ENCODE measurements at regions of chr6 and their contacts with region 1.

Region 1: DNA sequence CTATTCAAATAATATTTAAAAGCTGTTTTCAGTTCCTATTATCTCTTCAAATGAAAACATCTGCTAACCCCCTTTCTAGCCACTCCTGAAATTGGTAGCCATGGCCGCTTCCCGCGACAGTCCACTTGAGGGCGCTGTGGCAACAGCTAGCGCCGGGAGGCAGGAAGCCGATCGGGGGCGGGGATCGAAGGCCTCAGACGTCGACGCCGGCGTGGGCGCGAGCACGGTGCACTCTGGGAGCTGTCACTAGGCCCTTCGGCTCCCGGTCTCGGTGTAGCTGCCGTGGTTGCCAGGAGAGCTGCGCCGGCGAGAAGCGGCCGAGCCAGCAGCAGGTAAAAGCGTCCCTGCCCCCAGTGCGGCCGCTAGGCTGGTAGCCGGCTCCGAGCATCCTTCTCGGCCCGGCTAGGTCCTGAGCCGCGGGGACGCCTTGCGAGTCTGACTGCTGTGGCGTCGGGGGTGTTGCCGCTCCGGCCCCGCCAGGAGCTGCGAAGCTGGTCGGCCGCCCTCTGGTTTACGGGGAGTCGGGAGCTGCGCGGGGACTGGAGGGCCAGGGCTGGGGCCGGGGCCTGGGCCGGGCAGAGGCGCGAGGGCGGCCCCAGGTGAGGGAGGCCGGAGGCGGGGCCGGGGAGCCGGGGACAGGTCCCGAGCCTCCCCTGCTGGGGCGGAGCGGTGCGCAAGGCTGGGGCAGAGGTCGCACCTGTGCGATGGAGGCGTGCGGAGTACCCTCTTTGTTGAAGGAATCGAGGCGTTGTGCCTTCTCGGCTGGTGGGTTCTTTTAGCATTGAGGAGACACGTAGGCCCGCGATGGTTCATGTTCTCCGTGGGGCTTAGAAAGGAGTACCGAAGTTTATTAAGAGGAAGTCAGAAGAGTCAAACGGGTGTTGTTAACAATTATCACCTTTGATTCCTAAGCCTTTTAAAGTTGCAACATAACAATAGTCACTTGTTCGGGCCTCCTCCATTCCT is at the start of gene DOP1A:
- DNase-seq: peak; percentile 92
- H3K4me3 Mint-ChIP-seq: peak within 1 kb of the TSS; percentile 89
- H3K27ac Mint-ChIP-seq: peak within 1 kb of the TSS; percentile 89
- H3K4me1 Mint-ChIP-seq: peaks cover 28% of the 10 kb centered on the region
- H3K27me3 Mint-ChIP-seq: no peaks in the 10 kb centered on the region
- total RNA-seq, gene DOP1A: 6.7 and 7.1 TPM in 2 replicates

Region 2: GRCh38 chr6:82247634-82248232 is 820.0 kb before region 1 on chr6 and contains the start of gene IBTK:
- intact Hi-C with region 1: loop called (anchors 1 kb)
- DNase-seq: peak; percentile 88
- H3K4me3 Mint-ChIP-seq: peak within 1 kb of the TSS; percentile 93
- H3K27ac Mint-ChIP-seq: peak within 1 kb of the TSS; percentile 92
- H3K4me1 Mint-ChIP-seq: peaks cover 39% of the 10 kb centered on the region
- H3K27me3 Mint-ChIP-seq: no peaks in the 10 kb centered on the region
- total RNA-seq, gene IBTK: 36.1 and 39.8 TPM in 2 replicates

Region 3: DNA sequence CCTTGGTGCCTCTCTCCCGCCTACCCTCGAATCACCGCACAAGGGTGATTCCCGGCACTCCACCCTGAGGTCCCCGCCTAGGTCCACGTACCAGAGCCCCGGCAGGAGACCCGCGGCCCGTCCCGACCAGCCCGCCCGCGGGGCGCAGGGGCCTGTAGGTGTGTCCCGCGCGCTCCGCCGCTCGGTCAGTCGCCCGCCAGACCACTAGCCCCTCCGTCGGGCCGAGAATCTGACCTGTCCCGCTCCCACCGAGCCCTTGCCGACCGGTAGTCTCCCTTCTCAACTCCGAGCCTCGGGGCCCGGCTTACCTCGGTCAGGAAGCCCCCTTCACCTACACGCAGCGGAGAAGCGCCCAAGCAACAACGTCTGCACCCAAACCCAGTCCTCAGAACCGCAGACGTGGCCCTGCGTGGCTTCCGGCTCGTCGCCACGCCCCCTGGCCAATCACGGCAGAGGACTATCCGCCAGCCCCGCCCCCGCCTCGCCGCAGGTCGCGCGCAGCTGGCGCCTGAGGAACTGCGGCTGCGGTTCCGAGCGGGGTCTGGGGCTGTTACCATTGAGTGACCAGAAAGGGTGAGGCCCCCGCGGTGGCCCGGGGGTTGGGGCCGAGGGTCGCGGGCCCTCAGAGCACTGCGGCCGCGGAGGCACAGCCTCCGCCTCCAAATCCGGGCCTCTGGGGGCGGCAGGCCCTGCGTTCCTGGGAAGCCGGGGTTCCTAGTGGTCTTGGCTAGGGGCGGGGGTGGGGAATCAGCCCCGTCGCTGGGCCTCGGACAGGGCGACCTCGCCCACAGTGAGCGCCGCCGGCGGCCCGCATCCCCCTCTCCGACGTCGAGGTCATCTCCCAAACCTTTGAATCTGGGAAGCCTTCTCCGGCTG is 125.4 kb after region 1 on chr6 and contains the starts of genes PGM3 and RWDD2A:
- intact Hi-C with region 1: loop called (anchors 1 kb)
- DNase-seq: peak; percentile 85
- H3K4me3 Mint-ChIP-seq: peak within 1 kb of the TSS; percentile 98
- H3K27ac Mint-ChIP-seq: peak within 1 kb of the TSS; percentile 94
- H3K4me1 Mint-ChIP-seq: peaks cover 38% of the 10 kb centered on the region
- H3K27me3 Mint-ChIP-seq: peaks cover 2% of the 10 kb centered on the region
- total RNA-seq, gene PGM3: 24.8 and 25.4 TPM in 2 replicates
- total RNA-seq, gene RWDD2A: 0.98 and 1.3 TPM in 2 replicates

Region 4: DNA sequence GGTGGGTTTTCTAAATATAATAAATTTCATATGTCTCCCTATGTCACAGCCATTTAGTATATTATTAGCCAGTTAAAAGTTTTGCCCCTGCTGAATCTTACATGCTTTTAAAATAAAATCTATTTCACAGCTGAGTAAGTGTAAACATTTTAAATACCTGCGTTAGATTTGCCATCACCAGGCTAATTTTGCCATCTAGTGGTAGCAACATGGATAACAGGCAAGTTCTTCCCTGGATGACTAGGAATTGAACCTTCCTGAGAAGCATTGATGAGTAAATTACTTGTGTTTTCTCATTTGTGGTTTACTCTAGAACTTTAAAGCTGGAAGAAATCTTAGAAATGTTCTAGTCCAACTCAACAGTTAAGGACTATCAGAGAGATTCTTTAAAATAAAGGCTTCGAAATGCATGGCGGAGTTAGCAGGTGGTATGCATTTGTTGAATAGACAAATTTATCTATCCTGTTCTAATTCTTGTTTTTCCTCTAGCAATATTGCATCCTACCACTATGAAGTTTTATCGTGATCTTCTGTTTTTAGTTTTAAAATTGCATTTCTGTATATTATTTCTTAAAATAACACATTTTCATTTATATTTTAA is 447.2 kb after region 1 on chr6:
- intact Hi-C with region 1: loop called (anchors 1 kb)
- DNase-seq: no peak
- H3K4me3 Mint-ChIP-seq: no peak overlapping the region
- H3K27ac Mint-ChIP-seq: no peak overlapping the region
- H3K4me1 Mint-ChIP-seq: peaks cover 9% of the 10 kb centered on the region
- H3K27me3 Mint-ChIP-seq: peaks cover 41% of the 10 kb centered on the region

Region 5: DNA sequence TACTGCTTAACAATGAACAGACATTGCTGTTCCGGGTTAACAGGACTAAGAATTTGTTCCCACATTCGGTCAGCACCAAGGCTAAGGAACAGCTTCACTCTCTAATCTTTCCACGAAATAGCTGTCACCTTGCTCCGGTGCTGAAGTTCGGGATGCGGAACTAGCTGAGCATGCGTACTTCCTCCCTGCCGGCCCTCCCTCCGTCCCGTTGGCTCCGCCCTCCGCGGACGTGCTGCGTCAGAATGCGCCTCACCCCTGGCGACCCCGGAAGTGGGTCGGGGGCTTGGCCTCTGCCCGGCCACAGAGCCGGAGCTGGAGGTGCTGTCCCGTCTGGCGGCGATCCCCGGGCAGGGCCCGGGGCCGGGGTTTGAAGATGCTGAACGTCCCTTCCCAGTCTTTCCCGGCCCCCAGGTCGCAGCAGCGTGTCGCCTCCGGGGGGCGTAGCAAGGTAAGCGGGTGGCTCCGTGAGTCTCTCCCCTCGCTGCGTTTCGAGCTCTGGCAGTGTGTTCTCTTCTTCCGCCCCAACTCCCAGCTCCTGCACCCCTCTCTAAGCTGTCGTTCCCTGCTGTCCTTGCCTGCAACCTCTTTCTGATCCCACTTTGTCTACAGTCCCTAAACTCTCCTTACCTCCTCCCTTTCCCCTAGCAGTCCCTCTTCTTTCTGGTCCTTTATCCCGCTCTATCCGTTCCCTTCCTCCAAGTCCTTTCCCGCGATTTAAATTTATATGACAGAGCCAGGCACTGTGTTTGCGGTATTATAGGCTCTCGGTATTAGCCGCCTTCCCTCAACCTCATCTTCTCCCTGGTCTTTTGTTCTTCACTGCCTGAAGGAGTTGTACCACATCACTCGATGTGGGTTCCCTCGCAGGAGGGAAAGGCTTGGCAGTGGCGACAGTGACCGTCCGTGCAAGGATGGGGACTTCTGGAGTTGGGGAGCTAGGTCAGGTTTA is 792.0 kb after region 1 on chr6 and contains the start of gene CYB5R4:
- intact Hi-C with region 1: loop called (anchors 1 kb)
- DNase-seq: peak; percentile 91
- H3K4me3 Mint-ChIP-seq: peak within 1 kb of the TSS; percentile 99
- H3K27ac Mint-ChIP-seq: peak within 1 kb of the TSS; percentile 90
- H3K4me1 Mint-ChIP-seq: peaks cover 33% of the 10 kb centered on the region
- H3K27me3 Mint-ChIP-seq: peaks cover 11% of the 10 kb centered on the region
- total RNA-seq, gene CYB5R4: 24.5 and 25.3 TPM in 2 replicates